CD4-positive, alpha-beta T cell (primary cell): ENCODE measurements at regions of chr2 and their contacts with region 1.

Region 1: DNA sequence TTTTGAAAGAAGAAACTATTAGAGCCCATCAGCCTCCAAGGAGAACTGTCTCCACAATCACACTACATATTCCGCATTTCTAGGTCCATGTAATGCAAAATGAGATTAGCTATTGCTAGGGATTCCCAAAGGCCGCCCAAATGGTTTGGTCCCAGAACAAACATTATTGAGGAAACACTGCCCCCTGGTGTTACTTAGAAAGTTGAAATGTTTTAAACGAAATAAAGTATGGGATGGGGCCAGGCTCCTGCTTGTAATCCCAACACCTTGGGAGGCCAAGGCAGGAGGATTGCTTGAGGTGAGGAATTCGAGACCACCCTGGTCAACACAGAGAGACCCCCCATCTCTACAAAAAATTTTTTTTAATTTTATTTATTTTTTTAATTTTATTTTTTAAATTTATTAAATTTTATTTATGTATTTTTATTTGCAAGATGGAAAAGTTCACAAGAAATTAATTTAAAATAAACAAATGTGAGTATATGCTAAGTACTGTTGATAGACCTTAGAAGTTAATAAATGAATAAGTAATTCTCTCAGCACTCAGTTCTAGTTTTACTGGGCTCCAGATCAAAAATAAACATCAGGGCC is 5.5 kb downstream of the NHEJ1 start:
- DNase-seq: peak in 5 of 14 experiments; percentile 18 to 84 (median 75)
- ATAC-seq: peak; percentile 21
- H3K4me3 ChIP-seq: no peak overlapping the region
- H3K4me3 Mint-ChIP-seq: no peak overlapping the region
- H3K27ac ChIP-seq: no peak overlapping the region
- H3K27ac Mint-ChIP-seq: no peak overlapping the region
- H3K4me1 ChIP-seq: peaks cover 7% of the 10 kb centered on the region
- H3K4me1 Mint-ChIP-seq: peaks cover 13% of the 10 kb centered on the region
- H3K27me3 ChIP-seq: no peaks in the 10 kb centered on the region
- H3K27me3 Mint-ChIP-seq: no peaks in the 10 kb centered on the region
- CTCF ChIP-seq: peak; percentile 78

Region 2: DNA sequence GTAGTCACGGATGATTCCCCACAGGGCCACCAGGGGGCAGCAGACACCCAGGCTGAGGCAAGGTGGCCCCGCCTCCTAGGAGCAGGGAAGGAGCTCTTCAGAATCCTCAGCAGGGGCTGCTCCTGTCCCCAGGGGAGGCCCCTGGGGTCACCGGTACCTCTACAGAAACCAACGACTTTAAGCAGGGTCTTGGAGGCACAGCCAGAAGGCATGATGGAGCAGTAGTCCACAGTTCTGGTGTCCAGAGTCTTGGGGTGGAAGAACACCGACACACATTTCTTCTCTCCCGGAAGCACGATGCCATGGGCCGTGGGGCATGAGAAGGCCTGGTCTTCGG is 125.4 kb before region 1 on chr2:
- CTCF ChIA-PET with region 1: interaction called, 19 read pairs
- POLR2A ChIA-PET with region 1: interaction called, 3 read pairs
- intact Hi-C with region 1: loop called (anchors 1 kb)
- DNase-seq: peak; percentile 57 to 87 (median 68)
- ATAC-seq: peak; percentile 95
- H3K4me3 ChIP-seq: no peak overlapping the region
- H3K4me3 Mint-ChIP-seq: no peak overlapping the region
- H3K27ac ChIP-seq: no peak overlapping the region
- H3K27ac Mint-ChIP-seq: no peak overlapping the region
- H3K4me1 ChIP-seq: no peaks in the 10 kb centered on the region
- H3K4me1 Mint-ChIP-seq: no peaks in the 10 kb centered on the region
- H3K27me3 ChIP-seq: peaks cover 3 to 19% of the 10 kb centered on the region in 2 experiments
- H3K27me3 Mint-ChIP-seq: peaks cover 42% of the 10 kb centered on the region
- CTCF ChIP-seq: peak; percentile 94

Region 3: GRCh38 chr2:219057709-219058540 is 97.2 kb before region 1 on chr2:
- CTCF ChIA-PET with region 1: interaction called, 7 read pairs
- POLR2A ChIA-PET with region 1: no interaction called
- intact Hi-C with region 1: loop called (anchors 1 kb)
- DNase-seq: peak; percentile 54 to 87 (median 72)
- ATAC-seq: peak; percentile 98
- H3K4me3 ChIP-seq: peak overlapping the region; percentile 2
- H3K4me3 Mint-ChIP-seq: peak overlapping the region; percentile 76
- H3K27ac ChIP-seq: no peak overlapping the region
- H3K27ac Mint-ChIP-seq: no peak overlapping the region
- H3K4me1 ChIP-seq: peaks cover 38% of the 10 kb centered on the region
- H3K4me1 Mint-ChIP-seq: peaks cover 20% of the 10 kb centered on the region
- H3K27me3 ChIP-seq: peaks cover 57 to 79% of the 10 kb centered on the region in 2 experiments
- H3K27me3 Mint-ChIP-seq: peaks cover 79% of the 10 kb centered on the region
- CTCF ChIP-seq: peak; percentile 97

Region 4: DNA sequence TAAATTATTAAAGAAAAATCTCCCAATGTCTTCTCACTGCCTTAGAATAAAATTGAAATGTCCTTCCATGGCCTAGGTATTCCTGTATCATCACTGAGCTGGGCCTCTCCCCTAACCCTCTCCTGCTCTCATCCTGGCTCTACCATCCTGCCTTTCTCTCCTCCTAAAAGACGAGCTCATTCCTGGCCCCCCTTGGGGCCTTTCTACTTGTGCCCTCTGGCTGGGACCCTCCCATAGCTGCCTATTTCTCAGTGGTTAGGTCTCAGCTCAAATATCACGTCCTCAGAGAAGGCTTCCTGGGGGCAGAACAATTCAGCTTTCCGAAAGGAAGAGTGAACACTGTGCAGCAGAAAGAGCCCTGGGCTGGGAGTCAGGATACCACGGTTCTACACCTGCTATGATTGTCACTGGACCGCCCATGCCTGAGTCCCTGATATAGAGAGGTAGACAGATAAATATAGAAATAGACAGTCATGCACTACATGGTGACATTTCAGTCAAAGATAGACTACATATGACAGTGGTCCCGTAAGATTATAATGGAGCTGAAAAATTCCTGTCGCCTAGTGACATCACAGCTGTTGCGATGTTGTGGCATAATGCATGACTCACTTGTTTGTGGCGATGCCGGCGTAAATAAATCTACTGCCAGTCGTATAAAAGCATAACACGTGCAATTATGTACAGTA is 223.2 kb after region 1 on chr2:
- CTCF ChIA-PET with region 1: no interaction called
- POLR2A ChIA-PET with region 1: no interaction called
- intact Hi-C with region 1: no loop called
- DNase-seq: no peak
- ATAC-seq: no peak
- H3K4me3 ChIP-seq: no peak overlapping the region
- H3K4me3 Mint-ChIP-seq: no peak overlapping the region
- H3K27ac ChIP-seq: no peak overlapping the region
- H3K27ac Mint-ChIP-seq: no peak overlapping the region
- H3K4me1 ChIP-seq: no peaks in the 10 kb centered on the region
- H3K4me1 Mint-ChIP-seq: no peaks in the 10 kb centered on the region
- H3K27me3 ChIP-seq: no peaks in the 10 kb centered on the region
- H3K27me3 Mint-ChIP-seq: no peaks in the 10 kb centered on the region
- CTCF ChIP-seq: no peak